ENCODE measurements at regions of chr17 and their contacts with region 1.

Region 1: GRCh38 chr17:65988081-65988850 is 203.7 kb downstream of the CEP112 start:
- DNase-seq: peak; percentile 76
- ATAC-seq: peak; percentile 83
- H3K4me3 ChIP-seq: no peak overlapping the region
- H3K27ac ChIP-seq: no peak overlapping the region
- H3K4me1 ChIP-seq: no peaks in the 10 kb centered on the region
- H3K27me3 ChIP-seq: no peaks in the 10 kb centered on the region
- CTCF ChIP-seq: peak; percentile 87
- EP300 ChIP-seq: no peak
- POLR2A ChIP-seq: no peak
- RAD21 ChIP-seq: peak; percentile 81

Region 2: DNA sequence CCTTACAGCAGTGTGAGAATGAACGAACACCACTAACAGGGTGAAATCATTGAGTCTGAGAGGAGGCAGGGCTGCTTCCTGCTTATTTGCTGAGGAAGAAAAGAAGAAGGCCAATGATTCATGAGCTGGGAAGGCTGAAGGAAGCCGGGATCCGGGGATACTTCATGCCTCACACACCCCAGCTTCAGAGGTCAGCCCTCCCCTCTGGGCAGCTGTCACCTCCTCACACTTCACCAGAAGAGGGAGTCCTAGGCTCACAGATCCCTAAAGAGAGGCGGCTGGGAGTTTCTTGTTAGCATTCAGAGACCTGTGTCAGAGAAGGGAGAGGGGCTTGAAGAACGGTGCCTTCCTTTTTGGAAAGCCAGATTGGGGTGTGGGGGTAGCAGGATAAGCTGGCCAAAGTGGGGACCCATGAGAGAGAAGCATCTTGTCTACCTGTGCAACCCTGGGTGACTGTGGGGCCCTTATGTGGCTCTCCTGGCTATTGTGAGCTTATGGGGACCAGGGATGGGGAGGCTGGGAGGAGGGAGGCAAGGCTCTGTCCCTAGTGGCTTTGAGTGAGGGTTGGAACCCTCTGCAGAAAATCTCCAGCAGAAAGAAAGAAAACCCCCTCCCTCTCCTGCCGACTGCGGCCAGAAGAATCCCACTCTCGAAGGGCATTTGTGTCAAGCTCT is 756.5 kb before region 1 on chr17:
- CTCF ChIA-PET with region 1: interaction called, 25 read pairs
- POLR2A ChIA-PET with region 1: no interaction called
- in situ Hi-C with region 1: loop called (anchors 5 kb)
- intact Hi-C with region 1: loop called (anchors 1 kb)
- DNase-seq: peak; percentile 70
- ATAC-seq: peak; percentile 97
- H3K4me3 ChIP-seq: no peak overlapping the region
- H3K27ac ChIP-seq: no peak overlapping the region
- H3K4me1 ChIP-seq: no peaks in the 10 kb centered on the region
- H3K27me3 ChIP-seq: peaks cover 3 to 11% of the 10 kb centered on the region in 2 experiments; a peak in 3 of 5 replicates
- CTCF ChIP-seq: peak; percentile 90
- EP300 ChIP-seq: no peak
- POLR2A ChIP-seq: no peak
- RAD21 ChIP-seq: peak; percentile 76

Region 3: GRCh38 chr17:65278050-65278819 is 710.0 kb before region 1 on chr17:
- CTCF ChIA-PET with region 1: interaction called, 36 read pairs
- POLR2A ChIA-PET with region 1: no interaction called
- in situ Hi-C with region 1: no loop called
- intact Hi-C with region 1: loop called (anchors 1 kb)
- DNase-seq: peak; percentile 70
- ATAC-seq: peak; percentile 99
- H3K4me3 ChIP-seq: no peak overlapping the region
- H3K27ac ChIP-seq: no peak overlapping the region
- H3K4me1 ChIP-seq: peaks cover 5% of the 10 kb centered on the region; the same call in 1 of the 2 replicates
- H3K27me3 ChIP-seq: peaks cover 2 to 38% of the 10 kb centered on the region in 2 experiments; a peak in 2 of 5 replicates
- CTCF ChIP-seq: peak; percentile 94
- EP300 ChIP-seq: no peak
- POLR2A ChIP-seq: no peak
- RAD21 ChIP-seq: peak; percentile 89

Region 4: DNA sequence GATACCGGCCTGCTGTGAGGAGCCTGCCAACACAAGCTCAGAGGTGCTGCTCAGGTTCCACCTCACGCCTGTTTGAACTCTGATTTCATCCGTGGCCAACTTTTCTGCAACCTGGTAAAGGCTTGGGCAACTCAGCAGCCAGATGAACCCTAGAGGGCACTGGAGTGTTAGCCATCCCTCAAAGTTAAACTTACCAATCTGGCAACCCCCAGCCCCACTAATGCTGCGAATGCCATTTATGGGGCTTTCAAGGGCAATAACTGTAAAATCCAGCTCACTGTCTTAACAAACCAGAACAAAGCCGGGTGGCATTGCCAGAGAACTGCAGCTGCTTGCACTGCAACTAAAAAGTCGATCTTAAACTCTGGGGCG is 532.3 kb before region 1 on chr17:
- CTCF ChIA-PET with region 1: interaction called, 5 read pairs
- POLR2A ChIA-PET with region 1: no interaction called
- in situ Hi-C with region 1: no loop called
- intact Hi-C with region 1: loop called (anchors 1 kb)
- DNase-seq: peak; percentile 45
- ATAC-seq: peak; percentile 87
- H3K4me3 ChIP-seq: peak overlapping the region in 1 of 3 experiments; percentile 34; a peak in 1 of 6 replicates
- H3K27ac ChIP-seq: no peak overlapping the region
- H3K4me1 ChIP-seq: peaks cover 21% of the 10 kb centered on the region
- H3K27me3 ChIP-seq: peaks cover 6 to 26% of the 10 kb centered on the region in 2 experiments; a peak in 3 of 5 replicates
- CTCF ChIP-seq: peak; percentile 82
- EP300 ChIP-seq: no peak
- POLR2A ChIP-seq: no peak
- RAD21 ChIP-seq: peak; percentile 74

Measured in HepG2 (cell line).